ENCODE measurements at regions of chr1 and their contacts with region 1.

Region 1: GRCh38 chr1:84944767-84945486 is 51.9 kb upstream of the LPAR3 start:
- ATAC-seq: peak; percentile 94 to 99 (median 98)
- H3K4me3 ChIP-seq: peak overlapping the region in 1 of 5 donors; percentile 2
- H3K27ac ChIP-seq: no peak overlapping the region
- H3K4me1 ChIP-seq: peaks cover 0 to 3% of the 10 kb centered on the region in 2 donors

Region 2: GRCh38 chr1:83905315-83905907 is 1039.5 kb before region 1 on chr1:
- in situ Hi-C with region 1: loop called in 1 of 9 experiments (anchors 25 kb)
- ATAC-seq: no peak
- H3K4me3 ChIP-seq: no peak overlapping the region
- H3K27ac ChIP-seq: no peak overlapping the region
- H3K4me1 ChIP-seq: no peaks in the 10 kb centered on the region

Region 3: GRCh38 chr1:84450910-84451309 is 494.0 kb before region 1 on chr1:
- in situ Hi-C with region 1: loop called in 1 of 9 experiments (anchors 25 kb)
- ATAC-seq: no peak
- H3K4me3 ChIP-seq: no peak overlapping the region
- H3K27ac ChIP-seq: no peak overlapping the region
- H3K4me1 ChIP-seq: no peaks in the 10 kb centered on the region

Region 4: GRCh38 chr1:84632673-84633434 is 312.1 kb before region 1 on chr1:
- in situ Hi-C with region 1: loop called in 1 of 9 experiments (anchors 25 kb)
- ATAC-seq: peak; percentile 84 to 97 (median 94)
- H3K4me3 ChIP-seq: no peak overlapping the region
- H3K27ac ChIP-seq: no peak overlapping the region
- H3K4me1 ChIP-seq: peaks cover 0 to 3% of the 10 kb centered on the region in 2 donors

Region 5: DNA sequence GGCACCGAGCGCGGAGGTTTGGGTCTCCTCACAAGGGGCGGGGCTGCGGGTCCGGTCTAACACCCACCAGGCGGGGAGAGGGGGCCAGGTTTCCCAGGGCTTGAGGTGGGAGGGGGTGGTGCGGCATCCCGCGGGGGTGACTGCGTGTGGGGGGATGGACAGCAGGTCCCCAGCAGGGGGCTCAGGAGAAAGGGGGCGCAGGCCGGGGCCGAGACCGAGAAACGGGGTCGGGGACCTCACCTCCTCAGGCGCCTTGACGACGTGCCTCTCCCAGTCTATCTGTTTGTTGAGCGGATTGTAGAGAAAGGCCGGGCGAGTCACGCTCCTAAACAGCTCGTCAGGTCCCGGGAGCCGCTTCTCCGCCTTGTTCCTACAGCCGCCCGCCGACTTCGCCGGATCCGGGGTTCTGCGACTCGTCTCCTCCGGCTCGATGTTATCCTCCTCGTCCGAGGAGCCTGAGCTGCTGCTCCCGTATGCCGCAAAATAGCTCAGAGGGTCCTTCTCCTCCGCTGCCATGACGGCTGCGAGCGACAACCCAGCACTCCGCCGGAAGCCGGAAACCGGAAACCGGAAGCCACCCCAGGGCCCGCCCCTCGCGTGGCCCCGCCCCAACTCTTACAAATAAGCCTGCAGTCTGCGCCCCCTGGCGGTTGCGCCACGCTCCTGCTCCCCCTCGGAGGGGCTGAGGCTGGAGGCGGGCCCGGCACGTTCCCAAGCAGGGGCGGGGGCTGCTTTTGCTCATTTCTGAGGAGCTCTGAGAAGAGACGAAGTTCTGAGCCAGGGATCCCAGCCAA is 314.4 kb after region 1 on chr1 and contains the start of gene C1orf52:
- in situ Hi-C with region 1: loop called in 6 of 9 experiments (anchors 5 to 25 kb)
- ATAC-seq: peak; percentile 76 to 96 (median 95)
- H3K4me3 ChIP-seq: peak within 1 kb of the TSS; percentile 64 to 95 (median 73)
- H3K27ac ChIP-seq: peak within 1 kb of the TSS; percentile 89 to 95
- H3K4me1 ChIP-seq: peaks cover 11 to 15% of the 10 kb centered on the region in 2 donors
- total RNA-seq, gene C1orf52: 33.8 to 95.3 (median 59.4) TPM